MCF 10A (cell line): ENCODE measurements at regions of chr5 and their contacts with region 1.

Region 1: GRCh38 chr5:147822686-147823491 is 8.6 kb downstream of the SPINK1 start:
- DNase-seq: peak; percentile 77
- H3K4me3 Mint-ChIP-seq: no peak overlapping the region
- H3K27ac Mint-ChIP-seq: no peak overlapping the region
- H3K4me1 Mint-ChIP-seq: peaks cover 4% of the 10 kb centered on the region
- H3K27me3 Mint-ChIP-seq: peaks cover 33% of the 10 kb centered on the region
- CTCF ChIP-seq: peak; percentile 96

Region 2: DNA sequence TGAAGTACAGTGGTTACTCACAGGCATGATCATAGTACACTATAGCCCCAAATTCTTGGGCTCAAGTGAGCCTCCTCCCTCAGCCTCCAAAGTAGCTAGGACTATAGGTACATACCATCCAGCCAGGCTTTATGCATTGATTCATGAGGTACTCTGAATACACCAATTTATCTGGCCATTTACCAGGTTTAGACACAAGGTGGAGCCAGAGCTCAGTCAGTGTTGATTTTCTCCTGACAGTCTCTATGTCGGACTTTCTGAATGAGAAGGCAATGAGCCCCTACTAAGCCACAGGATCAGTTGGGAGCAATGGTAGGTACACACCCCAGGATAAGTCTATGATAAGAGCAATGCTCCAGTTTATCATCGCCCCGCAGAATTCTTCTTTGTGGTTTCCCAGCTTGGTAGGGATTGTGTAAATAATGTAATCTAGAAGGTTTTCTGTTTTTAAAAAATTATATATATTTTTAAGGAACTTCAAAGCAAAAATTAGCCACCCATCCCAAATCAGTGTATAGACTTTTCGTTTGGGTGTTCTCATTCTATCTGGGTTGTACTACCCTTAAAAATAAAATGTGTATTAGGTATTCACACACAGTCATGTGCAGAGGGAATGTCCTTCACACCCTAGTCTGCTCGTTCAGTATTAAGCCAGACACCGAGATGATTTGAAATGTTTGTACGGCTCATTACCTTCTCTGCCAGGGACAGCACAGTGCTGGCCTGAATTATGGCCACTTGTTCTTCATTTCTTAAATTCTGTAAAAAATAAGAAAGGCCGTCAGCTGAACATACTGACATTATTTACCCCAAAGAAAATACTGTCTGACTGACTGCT is 194.6 kb before region 1 on chr5:
- CTCF ChIA-PET with region 1: interaction called, 298 read pairs
- POLR2A ChIA-PET with region 1: interaction called, 17 read pairs
- intact Hi-C with region 1: loop called (anchors 1 kb)
- DNase-seq: peak; percentile 90
- H3K4me3 Mint-ChIP-seq: no peak overlapping the region
- H3K27ac Mint-ChIP-seq: no peak overlapping the region
- H3K4me1 Mint-ChIP-seq: no peaks in the 10 kb centered on the region
- H3K27me3 Mint-ChIP-seq: peaks cover 20% of the 10 kb centered on the region
- CTCF ChIP-seq: peak; percentile 91

Region 3: GRCh38 chr5:147673266-147673665 is 149.6 kb before region 1 on chr5:
- CTCF ChIA-PET with region 1: interaction called, 8 read pairs
- POLR2A ChIA-PET with region 1: no interaction called
- intact Hi-C with region 1: loop called (anchors 5 kb)
- DNase-seq: no peak
- H3K4me3 Mint-ChIP-seq: no peak overlapping the region
- H3K27ac Mint-ChIP-seq: no peak overlapping the region
- H3K4me1 Mint-ChIP-seq: no peaks in the 10 kb centered on the region
- H3K27me3 Mint-ChIP-seq: no peaks in the 10 kb centered on the region
- CTCF ChIP-seq: no peak

Region 4: DNA sequence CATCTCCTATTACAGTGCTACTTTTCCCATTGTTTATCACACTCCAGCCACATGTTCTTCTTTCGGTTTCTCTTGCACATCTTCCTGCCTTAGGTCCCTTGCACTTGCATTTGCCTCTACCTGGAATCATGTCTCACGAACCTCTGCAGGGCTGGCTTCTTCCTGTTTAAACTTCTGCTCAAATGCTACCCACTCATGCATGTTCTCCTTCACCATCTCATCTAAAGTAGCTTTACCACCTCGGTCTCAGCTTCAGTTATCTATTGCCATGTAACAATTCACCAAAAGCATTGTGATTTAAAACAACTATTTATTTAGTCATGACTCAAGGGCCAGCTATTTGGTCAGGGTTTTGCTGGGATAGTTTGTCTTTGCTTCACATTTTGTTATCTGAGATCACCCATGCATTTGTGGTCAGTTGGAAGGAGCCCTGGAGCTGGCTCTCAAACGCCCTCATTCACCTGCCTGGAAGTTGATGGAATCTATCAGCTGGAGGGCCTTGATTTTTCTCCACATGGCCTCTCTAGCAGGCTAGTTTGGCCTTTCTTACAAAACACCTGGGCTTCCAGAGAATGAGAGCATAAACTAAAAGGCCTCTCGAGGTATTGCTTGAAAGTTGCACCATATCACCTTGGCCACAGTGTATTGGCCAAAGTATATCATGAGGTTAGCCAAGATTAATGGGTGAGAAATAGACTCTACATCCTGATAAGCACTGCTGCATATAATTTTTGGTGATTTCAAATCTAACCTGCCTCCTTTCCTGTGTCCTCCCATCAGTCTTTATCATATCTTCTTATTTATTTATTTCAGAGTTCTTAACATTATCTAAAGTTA is 12.8 kb before region 1 on chr5:
- CTCF ChIA-PET with region 1: interaction called, 12 read pairs
- POLR2A ChIA-PET with region 1: no interaction called
- intact Hi-C with region 1: no loop called
- DNase-seq: no peak
- H3K4me3 Mint-ChIP-seq: no peak overlapping the region
- H3K27ac Mint-ChIP-seq: no peak overlapping the region
- H3K4me1 Mint-ChIP-seq: no peaks in the 10 kb centered on the region
- H3K27me3 Mint-ChIP-seq: no peaks in the 10 kb centered on the region
- CTCF ChIP-seq: no peak

Region 5: DNA sequence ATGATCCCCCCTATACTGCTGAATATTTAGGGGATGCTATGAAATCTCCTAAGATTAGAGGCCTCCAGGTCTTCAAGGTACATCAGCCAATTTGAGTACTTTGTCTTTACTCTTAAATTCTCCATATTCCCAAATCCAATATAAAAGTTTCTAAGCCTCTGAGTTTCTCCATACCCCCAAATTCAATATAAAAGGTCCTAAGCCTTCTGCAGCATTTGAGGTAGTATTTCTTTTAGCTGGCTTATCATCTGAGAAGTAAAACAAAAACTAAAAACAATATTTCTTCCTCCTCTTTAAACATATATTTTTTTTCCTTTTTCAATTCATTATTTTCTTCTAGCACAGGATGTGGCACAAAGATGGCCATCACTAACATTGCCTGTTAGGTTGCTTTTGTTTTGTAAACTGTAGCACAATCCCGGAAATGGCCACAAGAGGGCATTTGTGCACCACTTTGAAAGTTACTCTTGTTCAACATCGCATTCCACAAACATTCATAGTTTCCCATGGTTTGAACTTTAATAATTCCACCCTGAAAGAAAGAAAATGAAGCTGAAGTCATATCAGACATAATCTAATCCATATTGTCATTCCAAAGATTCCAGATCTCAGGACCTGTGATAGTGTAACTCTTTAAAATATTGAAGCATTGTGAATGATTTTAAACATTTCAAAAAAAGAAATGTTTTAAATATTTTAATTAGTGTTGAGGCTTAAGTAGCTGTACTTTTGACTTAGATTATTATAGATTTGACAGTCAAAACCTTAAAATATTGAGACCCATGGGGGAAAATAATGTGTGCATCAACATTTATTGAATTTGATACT is 34.6 kb after region 1 on chr5:
- CTCF ChIA-PET with region 1: interaction called, 13 read pairs
- POLR2A ChIA-PET with region 1: interaction called, 3 read pairs
- intact Hi-C with region 1: no loop called
- DNase-seq: peak; percentile 80
- H3K4me3 Mint-ChIP-seq: no peak overlapping the region
- H3K27ac Mint-ChIP-seq: no peak overlapping the region
- H3K4me1 Mint-ChIP-seq: no peaks in the 10 kb centered on the region
- H3K27me3 Mint-ChIP-seq: no peaks in the 10 kb centered on the region
- CTCF ChIP-seq: peak; percentile 76